Naive thymus-derived CD4-positive, alpha-beta T cell (primary cell): ENCODE measurements at regions of chr14 and their contacts with region 1.

Region 1: GRCh38 chr14:77097700-77098528 is at the start of gene CIPC:
- DNase-seq: peak; percentile 92 to 99 (median 98)
- ATAC-seq: peak; percentile 96
- H3K4me3 ChIP-seq: peak within 1 kb of the TSS; percentile 85
- H3K4me3 Mint-ChIP-seq: peak within 1 kb of the TSS; percentile 84 to 98 (median 90)
- H3K27ac ChIP-seq: peak within 1 kb of the TSS; percentile 97
- H3K27ac Mint-ChIP-seq: peak within 1 kb of the TSS; percentile 83 to 99 (median 97)
- H3K4me1 ChIP-seq: peaks cover 9 to 11% of the 10 kb centered on the region in 2 donors
- H3K4me1 Mint-ChIP-seq: peaks cover 24 to 55% (median 41%) of the 10 kb centered on the region in 7 donors
- H3K27me3 ChIP-seq: no peaks in the 10 kb centered on the region
- H3K27me3 Mint-ChIP-seq: peaks cover 0 to 3% (median 0%) of the 10 kb centered on the region in 5 donors
- total RNA-seq, gene CIPC: 5.5 to 14.2 (median 12.9) TPM

Region 2: GRCh38 chr14:76151398-76152339 is 946.2 kb before region 1 on chr14 and contains the start of gene GPATCH2L:
- CTCF ChIA-PET with region 1: no interaction called
- POLR2A ChIA-PET with region 1: no interaction called
- intact Hi-C with region 1: loop called in 1 of 2 experiments (anchors 1 kb)
- DNase-seq: peak; percentile 90 to 98 (median 95)
- ATAC-seq: peak; percentile 96
- H3K4me3 ChIP-seq: peak within 1 kb of the TSS; percentile 91
- H3K4me3 Mint-ChIP-seq: peak within 1 kb of the TSS; percentile 89 to 98 (median 95)
- H3K27ac ChIP-seq: peak within 1 kb of the TSS; percentile 95
- H3K27ac Mint-ChIP-seq: peak within 1 kb of the TSS; percentile 86 to 98 (median 96)
- H3K4me1 ChIP-seq: peaks cover 40 to 44% of the 10 kb centered on the region in 2 donors
- H3K4me1 Mint-ChIP-seq: peaks cover 40 to 56% (median 53%) of the 10 kb centered on the region in 7 donors
- H3K27me3 ChIP-seq: no peaks in the 10 kb centered on the region
- H3K27me3 Mint-ChIP-seq: peaks cover 0 to 18% (median 0%) of the 10 kb centered on the region in 5 donors
- total RNA-seq, gene GPATCH2L: 60.4 to 83.1 (median 66.6) TPM

Region 3: GRCh38 chr14:76844223-76844622 is 253.7 kb before region 1 on chr14:
- CTCF ChIA-PET with region 1: interaction called, 3 read pairs
- POLR2A ChIA-PET with region 1: no interaction called
- intact Hi-C with region 1: loop called in 1 of 2 experiments (anchors 1 kb)
- DNase-seq: peak in 8 of 9 donors; percentile 20 to 76 (median 68)
- ATAC-seq: peak; percentile 100
- H3K4me3 ChIP-seq: peak overlapping the region; percentile 31
- H3K4me3 Mint-ChIP-seq: peak overlapping the region; percentile 20 to 78 (median 62)
- H3K27ac ChIP-seq: no peak overlapping the region
- H3K27ac Mint-ChIP-seq: peak overlapping the region; percentile 65 to 92 (median 80)
- H3K4me1 ChIP-seq: peaks cover 8% of the 10 kb centered on the region in 2 donors
- H3K4me1 Mint-ChIP-seq: peaks cover 8 to 11% (median 10%) of the 10 kb centered on the region in 7 donors
- H3K27me3 ChIP-seq: no peaks in the 10 kb centered on the region
- H3K27me3 Mint-ChIP-seq: peaks cover 4 to 26% (median 11%) of the 10 kb centered on the region in 5 donors

Region 4: GRCh38 chr14:76962303-76962660 is 135.6 kb before region 1 on chr14:
- CTCF ChIA-PET with region 1: no interaction called
- POLR2A ChIA-PET with region 1: no interaction called
- intact Hi-C with region 1: loop called (anchors 1 kb)
- DNase-seq: no peak
- ATAC-seq: no peak
- H3K4me3 ChIP-seq: peak overlapping the region; percentile 82
- H3K4me3 Mint-ChIP-seq: peak overlapping the region; percentile 74 to 86 (median 84)
- H3K27ac ChIP-seq: peak overlapping the region; percentile 87
- H3K27ac Mint-ChIP-seq: peak overlapping the region; percentile 87 to 99 (median 91)
- H3K4me1 ChIP-seq: peaks cover 39 to 59% of the 10 kb centered on the region in 2 donors
- H3K4me1 Mint-ChIP-seq: peaks cover 41 to 89% (median 79%) of the 10 kb centered on the region in 7 donors
- H3K27me3 ChIP-seq: no peaks in the 10 kb centered on the region
- H3K27me3 Mint-ChIP-seq: peaks cover 0 to 8% (median 0%) of the 10 kb centered on the region in 5 donors

Region 5: GRCh38 chr14:77067632-77068514 is 30.0 kb before region 1 on chr14:
- CTCF ChIA-PET with region 1: interaction called, 6 read pairs
- POLR2A ChIA-PET with region 1: no interaction called
- intact Hi-C with region 1: loop called (anchors 1 kb)
- DNase-seq: peak; percentile 21 to 59 (median 48)
- ATAC-seq: peak; percentile 79
- H3K4me3 ChIP-seq: no peak overlapping the region
- H3K4me3 Mint-ChIP-seq: no peak overlapping the region
- H3K27ac ChIP-seq: no peak overlapping the region
- H3K27ac Mint-ChIP-seq: peak overlapping the region in 1 of 9 donors; percentile 36
- H3K4me1 ChIP-seq: no peaks in the 10 kb centered on the region
- H3K4me1 Mint-ChIP-seq: peaks cover 0 to 3% (median 0%) of the 10 kb centered on the region in 7 donors
- H3K27me3 ChIP-seq: no peaks in the 10 kb centered on the region
- H3K27me3 Mint-ChIP-seq: peaks cover 0 to 11% (median 4%) of the 10 kb centered on the region in 5 donors

Region 6: GRCh38 chr14:77457522-77458290 is 359.8 kb after region 1 on chr14 and contains the starts of genes AHSA1 and VIPAS39:
- CTCF ChIA-PET with region 1: no interaction called
- POLR2A ChIA-PET with region 1: no interaction called
- intact Hi-C with region 1: loop called (anchors 1 kb)
- DNase-seq: peak; percentile 67 to 98 (median 96)
- ATAC-seq: peak; percentile 98
- H3K4me3 ChIP-seq: peak within 1 kb of the TSS; percentile 100
- H3K4me3 Mint-ChIP-seq: peak within 1 kb of the TSS; percentile 96 to 100 (median 100)
- H3K27ac ChIP-seq: peak within 1 kb of the TSS; percentile 82
- H3K27ac Mint-ChIP-seq: peak within 1 kb of the TSS; percentile 94 to 100 (median 99)
- H3K4me1 ChIP-seq: peaks cover 20 to 26% of the 10 kb centered on the region in 2 donors
- H3K4me1 Mint-ChIP-seq: peaks cover 22 to 67% (median 53%) of the 10 kb centered on the region in 7 donors
- H3K27me3 ChIP-seq: no peaks in the 10 kb centered on the region
- H3K27me3 Mint-ChIP-seq: no peaks in the 10 kb centered on the region
- total RNA-seq, gene AHSA1: 51.6 to 176 (median 103) TPM
- total RNA-seq, gene VIPAS39: 12.1 to 21.2 (median 20.5) TPM

Region 7: GRCh38 chr14:77470192-77470870 is 372.4 kb after region 1 on chr14:
- CTCF ChIA-PET with region 1: no interaction called
- POLR2A ChIA-PET with region 1: no interaction called
- intact Hi-C with region 1: no loop called
- DNase-seq: no peak
- ATAC-seq: no peak
- H3K4me3 ChIP-seq: no peak overlapping the region
- H3K4me3 Mint-ChIP-seq: no peak overlapping the region
- H3K27ac ChIP-seq: no peak overlapping the region
- H3K27ac Mint-ChIP-seq: no peak overlapping the region
- H3K4me1 ChIP-seq: no peaks in the 10 kb centered on the region
- H3K4me1 Mint-ChIP-seq: peaks cover 0 to 2% (median 0%) of the 10 kb centered on the region in 7 donors
- H3K27me3 ChIP-seq: no peaks in the 10 kb centered on the region
- H3K27me3 Mint-ChIP-seq: no peaks in the 10 kb centered on the region